CD4-positive, alpha-beta memory T cell (primary cell): ENCODE measurements at regions of chr2 and their contacts with region 1.

Region 1: GRCh38 chr2:219253753-219254590 is at the start of gene TUBA4A:
- DNase-seq: peak; percentile 89 to 90 (median 90)
- H3K4me3 ChIP-seq: peak within 1 kb of the TSS; percentile 94 to 100
- H3K4me3 Mint-ChIP-seq: peak within 1 kb of the TSS; percentile 85 to 99 (median 94)
- H3K27ac ChIP-seq: peak within 1 kb of the TSS; percentile 87
- H3K27ac Mint-ChIP-seq: peak within 1 kb of the TSS; percentile 92 to 98 (median 97)
- H3K4me1 ChIP-seq: peaks cover 42% of the 10 kb centered on the region
- H3K4me1 Mint-ChIP-seq: peaks cover 34 to 60% (median 45%) of the 10 kb centered on the region in 4 donors
- H3K27me3 ChIP-seq: no peaks in the 10 kb centered on the region
- H3K27me3 Mint-ChIP-seq: no peaks in the 10 kb centered on the region
- total RNA-seq, gene TUBA4A: 242 to 259 TPM

Region 2: GRCh38 chr2:218166791-218167190 is 1087.2 kb before region 1 on chr2 and contains the start of gene CXCR1:
- CTCF ChIA-PET with region 1: no interaction called
- POLR2A ChIA-PET with region 1: no interaction called
- intact Hi-C with region 1: no loop called
- DNase-seq: peak; percentile 56 to 67 (median 64)
- H3K4me3 ChIP-seq: no peak within 1 kb of the TSS
- H3K4me3 Mint-ChIP-seq: peak within 1 kb of the TSS in 7 of 8 donors; percentile 55 to 86 (median 66)
- H3K27ac ChIP-seq: no peak within 1 kb of the TSS
- H3K27ac Mint-ChIP-seq: peak within 1 kb of the TSS in 6 of 7 donors; percentile 25 to 89 (median 54)
- H3K4me1 ChIP-seq: peaks cover 30% of the 10 kb centered on the region
- H3K4me1 Mint-ChIP-seq: peaks cover 19 to 41% (median 30%) of the 10 kb centered on the region in 4 donors
- H3K27me3 ChIP-seq: no peaks in the 10 kb centered on the region
- H3K27me3 Mint-ChIP-seq: peaks cover 2 to 8% of the 10 kb centered on the region in 2 donors
- total RNA-seq, gene CXCR1: not detected

Region 3: DNA sequence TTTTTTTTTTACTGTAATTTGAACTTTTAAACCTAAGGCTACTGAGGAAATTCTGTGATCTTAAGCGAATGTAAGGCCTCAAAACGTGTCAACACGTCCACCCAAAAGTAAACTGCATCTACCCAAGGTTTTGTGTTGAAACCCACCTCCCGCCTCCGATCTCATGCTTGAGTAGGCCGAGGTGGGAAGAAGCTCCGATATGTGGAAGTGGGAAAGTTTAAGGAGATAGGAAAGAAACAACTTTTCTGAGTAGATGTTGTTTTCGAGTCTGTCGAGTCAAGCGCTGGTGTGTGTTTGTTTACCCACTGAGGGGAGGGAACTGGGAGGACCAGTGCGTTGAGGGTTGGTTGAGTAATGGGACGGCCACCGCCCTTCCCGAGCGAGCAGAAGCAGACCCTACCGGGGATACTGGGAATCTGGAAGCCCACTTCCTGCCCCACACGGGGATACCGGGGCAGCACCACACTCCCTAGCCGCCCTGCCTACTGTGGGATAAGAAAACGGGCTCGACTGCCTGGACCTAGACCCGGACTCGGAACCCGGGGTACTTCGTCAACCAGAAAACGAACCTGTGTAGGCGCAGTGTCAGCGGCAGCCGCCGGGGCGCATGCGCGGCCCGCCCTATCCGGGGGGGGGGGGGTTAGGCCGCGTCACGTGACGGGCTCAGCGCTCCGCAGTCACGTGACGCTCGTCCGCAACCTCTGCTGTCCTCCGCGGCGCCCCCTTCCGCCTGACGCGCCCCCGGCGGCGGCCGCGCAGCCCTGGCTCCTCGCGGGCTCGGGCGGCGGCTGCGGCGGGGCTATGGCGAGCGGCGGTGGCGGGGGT is 76.2 kb before region 1 on chr2 and contains the start of gene RETREG2:
- CTCF ChIA-PET with region 1: interaction called, 18 read pairs
- POLR2A ChIA-PET with region 1: interaction called, 119 read pairs
- intact Hi-C with region 1: loop called (anchors 1 kb)
- DNase-seq: peak; percentile 88 to 91 (median 88)
- H3K4me3 ChIP-seq: peak within 1 kb of the TSS; percentile 81 to 96
- H3K4me3 Mint-ChIP-seq: peak within 1 kb of the TSS; percentile 91 to 98 (median 95)
- H3K27ac ChIP-seq: peak within 1 kb of the TSS; percentile 91
- H3K27ac Mint-ChIP-seq: peak within 1 kb of the TSS; percentile 96 to 99 (median 98)
- H3K4me1 ChIP-seq: peaks cover 66% of the 10 kb centered on the region
- H3K4me1 Mint-ChIP-seq: peaks cover 34 to 79% (median 62%) of the 10 kb centered on the region in 4 donors
- H3K27me3 ChIP-seq: no peaks in the 10 kb centered on the region
- H3K27me3 Mint-ChIP-seq: no peaks in the 10 kb centered on the region
- total RNA-seq, gene RETREG2: 123 to 128 TPM